PC-9 (cell line): ENCODE measurements at regions of chr2 and their contacts with region 1.

Region 1: DNA sequence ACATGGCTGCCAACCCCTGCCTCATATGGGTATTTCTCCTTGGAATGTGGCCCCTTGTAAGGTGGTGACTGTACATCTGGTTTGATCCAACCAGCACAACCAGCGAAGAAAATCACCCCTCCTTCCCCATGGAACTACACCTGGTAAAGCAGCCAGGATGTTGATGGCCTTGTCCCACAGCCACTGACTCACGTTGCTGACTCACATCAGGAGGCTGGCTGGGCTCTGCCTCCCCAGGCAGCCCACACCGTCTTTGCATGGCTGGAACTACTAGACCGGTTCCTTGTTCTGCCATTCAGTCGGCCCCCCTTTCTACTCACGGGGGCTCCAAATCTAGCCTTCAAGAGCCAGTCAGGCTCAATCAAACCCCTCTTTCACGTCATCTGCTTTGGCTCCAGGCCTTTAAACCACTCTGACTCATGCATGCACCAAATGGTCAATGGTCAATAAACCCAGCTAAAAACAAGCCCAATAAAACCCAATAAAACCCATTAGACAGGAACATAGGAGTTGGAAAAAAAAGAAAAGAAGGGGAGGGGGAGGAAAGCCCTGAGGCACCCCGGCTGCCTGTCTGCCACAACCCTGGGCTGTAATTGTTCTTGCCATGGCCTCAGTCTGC is 114.8 kb downstream of the PLB1 start:
- DNase-seq: peak; percentile 91 to 99
- H3K4me3 ChIP-seq: no peak overlapping the region
- H3K27ac ChIP-seq: peak overlapping the region; percentile 83
- H3K4me1 ChIP-seq: peaks cover 59% of the 10 kb centered on the region
- H3K27me3 ChIP-seq: no peaks in the 10 kb centered on the region
- CTCF ChIP-seq: no peak

Region 2: GRCh38 chr2:28633746-28634145 is 23.1 kb after region 1 on chr2:
- CTCF ChIA-PET with region 1: no interaction called
- POLR2A ChIA-PET with region 1: no interaction called
- intact Hi-C with region 1: loop called (anchors 1 kb)
- DNase-seq: peak; percentile 83 to 98
- H3K4me3 ChIP-seq: no peak overlapping the region
- H3K27ac ChIP-seq: peak overlapping the region; percentile 85
- H3K4me1 ChIP-seq: peaks cover 28% of the 10 kb centered on the region
- H3K27me3 ChIP-seq: no peaks in the 10 kb centered on the region
- CTCF ChIP-seq: no peak

Region 3: DNA sequence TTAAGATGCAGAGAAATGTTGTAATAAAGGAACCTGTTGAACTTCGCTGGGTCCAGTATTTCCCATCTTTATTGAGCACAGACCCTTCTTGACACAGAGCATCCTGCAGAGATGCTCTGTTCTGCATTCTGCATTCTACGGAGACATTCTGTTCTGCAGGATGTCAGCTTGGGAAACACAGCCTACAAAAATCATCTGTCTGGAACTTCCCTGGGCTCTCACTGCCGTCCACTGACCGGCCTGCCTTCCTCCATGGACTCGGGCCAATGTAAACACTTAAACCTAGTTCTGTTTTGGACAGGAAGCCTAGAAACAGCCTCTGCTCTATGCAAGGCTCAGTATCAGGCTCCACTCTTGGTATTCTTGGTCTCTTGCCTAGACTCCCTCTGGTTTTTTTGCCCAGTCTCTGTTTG is 50.9 kb after region 1 on chr2:
- CTCF ChIA-PET with region 1: no interaction called
- POLR2A ChIA-PET with region 1: no interaction called
- intact Hi-C with region 1: loop called (anchors 5 kb)
- DNase-seq: peak; percentile 58 to 75
- H3K4me3 ChIP-seq: no peak overlapping the region
- H3K27ac ChIP-seq: peak overlapping the region; percentile 73
- H3K4me1 ChIP-seq: peaks cover 72% of the 10 kb centered on the region
- H3K27me3 ChIP-seq: no peaks in the 10 kb centered on the region
- CTCF ChIP-seq: no peak

Region 4: GRCh38 chr2:28801726-28802487 is 191.2 kb after region 1 on chr2:
- CTCF ChIA-PET with region 1: no interaction called
- POLR2A ChIA-PET with region 1: interaction called, 10 read pairs
- intact Hi-C with region 1: no loop called
- DNase-seq: peak in 1 of 2 experiments; percentile 68
- H3K4me3 ChIP-seq: no peak overlapping the region
- H3K27ac ChIP-seq: peak overlapping the region; percentile 91
- H3K4me1 ChIP-seq: peaks cover 32% of the 10 kb centered on the region
- H3K27me3 ChIP-seq: no peaks in the 10 kb centered on the region
- CTCF ChIP-seq: no peak

Region 5: GRCh38 chr2:30048636-30049180 is 1438.0 kb after region 1 on chr2:
- CTCF ChIA-PET with region 1: no interaction called
- POLR2A ChIA-PET with region 1: no interaction called
- intact Hi-C with region 1: no loop called
- DNase-seq: no peak
- H3K4me3 ChIP-seq: no peak overlapping the region
- H3K27ac ChIP-seq: no peak overlapping the region
- H3K4me1 ChIP-seq: no peaks in the 10 kb centered on the region
- H3K27me3 ChIP-seq: peaks cover 74% of the 10 kb centered on the region
- CTCF ChIP-seq: no peak